Prostate gland (tissue), 2 donors: ENCODE measurements at regions of chrX and their contacts with region 1.

Region 1: GRCh38 chrX:151082076-151082948 is 94.1 kb upstream of the GPR50 start:
- DNase-seq: peak; percentile 14
- H3K4me3 ChIP-seq: no peak overlapping the region
- H3K27ac ChIP-seq: no peak overlapping the region
- H3K4me1 ChIP-seq: no peaks in the 10 kb centered on the region
- H3K27me3 ChIP-seq: no peaks in the 10 kb centered on the region
- CTCF ChIP-seq: peak; percentile 80 to 87 (median 86)
- POLR2A ChIP-seq: no peak

Region 2: DNA sequence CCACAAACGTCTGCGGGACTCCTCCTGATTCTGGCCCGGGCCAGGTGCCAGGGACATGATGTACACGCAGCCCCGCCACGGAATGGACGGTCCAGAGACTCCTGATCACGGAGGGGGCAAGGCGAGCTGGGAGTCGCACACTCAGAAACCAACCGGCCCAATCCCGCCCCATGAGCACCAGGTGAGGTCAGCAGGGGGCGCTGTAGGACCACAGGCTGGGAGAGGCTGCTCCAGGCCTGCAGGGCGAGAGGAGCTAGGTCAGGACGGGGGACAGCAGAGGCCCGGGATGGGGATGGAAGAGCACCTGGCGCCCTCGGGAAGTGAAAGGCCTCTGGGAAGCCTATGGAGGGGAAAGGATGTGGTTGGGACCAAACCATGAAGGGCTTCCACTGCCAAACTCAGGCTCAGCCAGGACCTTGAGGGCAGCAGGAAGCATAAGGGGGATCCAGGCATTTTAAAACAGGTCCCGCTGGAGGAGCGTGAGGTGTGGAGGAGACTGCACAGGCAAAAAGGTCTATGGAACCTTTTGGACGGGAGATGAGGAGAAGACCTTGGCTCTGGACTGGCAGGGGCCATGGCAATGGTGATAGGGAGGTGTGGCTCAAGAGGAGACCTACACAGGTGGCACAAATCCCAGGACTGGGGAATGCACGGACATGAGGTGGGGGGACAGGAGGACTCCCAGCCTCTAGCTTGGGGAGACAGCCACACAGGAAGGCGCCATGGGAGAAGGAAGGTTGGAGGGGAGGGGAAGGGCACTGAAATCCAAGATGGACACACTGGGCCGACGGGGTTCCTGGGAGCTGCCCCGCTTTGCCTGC is 310.0 kb before region 1 on chrX:
- intact Hi-C with region 1: loop called (anchors 2 kb)
- DNase-seq: peak; percentile 57
- H3K4me3 ChIP-seq: no peak overlapping the region
- H3K27ac ChIP-seq: no peak overlapping the region
- H3K4me1 ChIP-seq: no peaks in the 10 kb centered on the region
- H3K27me3 ChIP-seq: no peaks in the 10 kb centered on the region
- CTCF ChIP-seq: peak; percentile 54 to 86 (median 74)
- POLR2A ChIP-seq: no peak